ENCODE measurements at regions of chr12 and their contacts with region 1.

Region 1: GRCh38 chr12:108570743-108571608 is 8.6 kb downstream of the ISCU start:
- DNase-seq: no peak
- ATAC-seq: peak in 2 of 8 donors; percentile 12 to 27
- H3K4me3 ChIP-seq: no peak overlapping the region
- H3K27ac ChIP-seq: peak overlapping the region in 1 of 10 donors; percentile 15
- H3K4me1 ChIP-seq: peaks cover 0 to 30% (median 6%) of the 10 kb centered on the region in 9 donors
- H3K27me3 ChIP-seq: no peaks in the 10 kb centered on the region
- CTCF ChIP-seq: peak in 8 of 9 donors; percentile 6 to 52 (median 40)

Region 2: GRCh38 chr12:108514973-108515814 is 55.8 kb before region 1 on chr12 and contains the start of gene FICD:
- intact Hi-C with region 1: no loop called
- DNase-seq: peak; percentile 100
- ATAC-seq: peak; percentile 93 to 98 (median 97)
- H3K4me3 ChIP-seq: peak within 1 kb of the TSS; percentile 65 to 96 (median 79)
- H3K27ac ChIP-seq: peak within 1 kb of the TSS in 9 of 10 donors; percentile 19 to 92 (median 73)
- H3K4me1 ChIP-seq: peaks cover 0 to 29% (median 16%) of the 10 kb centered on the region in 9 donors
- H3K27me3 ChIP-seq: peaks cover 0 to 2% (median 0%) of the 10 kb centered on the region in 7 donors
- CTCF ChIP-seq: no peak
- total RNA-seq, gene FICD: 2.1 to 4.4 (median 2.8) TPM

Region 3: DNA sequence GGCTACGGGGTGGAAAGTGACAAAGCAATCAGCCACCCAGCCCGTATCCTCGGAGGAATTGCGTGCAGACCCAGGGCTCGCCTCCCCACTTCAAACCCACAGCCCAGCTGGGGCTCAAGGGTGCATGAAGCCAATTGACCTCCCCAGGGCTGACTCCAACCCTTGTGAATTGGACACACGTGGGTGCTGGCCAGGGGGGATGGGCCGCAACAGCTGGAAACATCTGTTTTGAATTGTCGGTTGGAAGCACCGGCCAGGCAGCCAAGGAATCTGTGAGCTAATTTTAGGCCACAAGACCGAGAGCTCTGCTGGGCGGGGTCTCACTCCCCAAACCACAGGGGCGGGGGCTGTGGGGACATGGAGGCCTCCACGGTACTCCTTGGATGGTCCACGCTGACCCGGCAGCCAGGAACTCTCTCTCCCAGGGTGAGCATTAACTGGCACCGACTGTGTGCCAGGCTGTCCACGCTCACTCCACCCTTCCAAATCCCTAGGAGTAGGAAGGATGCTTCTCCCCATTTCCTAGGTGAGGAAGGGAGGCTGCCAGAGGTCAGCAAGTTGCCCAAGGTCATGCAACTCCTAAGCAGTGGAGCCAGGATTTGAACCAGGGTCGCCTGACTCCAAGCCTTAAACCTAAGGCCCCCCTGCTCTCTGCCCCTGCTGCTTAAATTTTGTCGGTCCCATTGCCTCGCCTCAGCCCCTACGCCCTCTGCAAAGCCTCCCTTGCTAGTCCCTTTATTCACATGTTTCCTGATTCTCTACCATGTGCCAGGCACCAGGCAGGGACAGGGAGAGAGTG is 38.8 kb after region 1 on chr12:
- intact Hi-C with region 1: loop called in 2 of 10 experiments (anchors 2 to 5 kb)
- DNase-seq: peak; percentile 73 to 84
- ATAC-seq: peak; percentile 81 to 93 (median 86)
- H3K4me3 ChIP-seq: peak overlapping the region in 1 of 10 donors; percentile 15
- H3K27ac ChIP-seq: peak overlapping the region in 2 of 10 donors; percentile 6 to 12
- H3K4me1 ChIP-seq: peaks cover 0 to 31% (median 11%) of the 10 kb centered on the region in 9 donors
- H3K27me3 ChIP-seq: no peaks in the 10 kb centered on the region
- CTCF ChIP-seq: no peak

Region 4: DNA sequence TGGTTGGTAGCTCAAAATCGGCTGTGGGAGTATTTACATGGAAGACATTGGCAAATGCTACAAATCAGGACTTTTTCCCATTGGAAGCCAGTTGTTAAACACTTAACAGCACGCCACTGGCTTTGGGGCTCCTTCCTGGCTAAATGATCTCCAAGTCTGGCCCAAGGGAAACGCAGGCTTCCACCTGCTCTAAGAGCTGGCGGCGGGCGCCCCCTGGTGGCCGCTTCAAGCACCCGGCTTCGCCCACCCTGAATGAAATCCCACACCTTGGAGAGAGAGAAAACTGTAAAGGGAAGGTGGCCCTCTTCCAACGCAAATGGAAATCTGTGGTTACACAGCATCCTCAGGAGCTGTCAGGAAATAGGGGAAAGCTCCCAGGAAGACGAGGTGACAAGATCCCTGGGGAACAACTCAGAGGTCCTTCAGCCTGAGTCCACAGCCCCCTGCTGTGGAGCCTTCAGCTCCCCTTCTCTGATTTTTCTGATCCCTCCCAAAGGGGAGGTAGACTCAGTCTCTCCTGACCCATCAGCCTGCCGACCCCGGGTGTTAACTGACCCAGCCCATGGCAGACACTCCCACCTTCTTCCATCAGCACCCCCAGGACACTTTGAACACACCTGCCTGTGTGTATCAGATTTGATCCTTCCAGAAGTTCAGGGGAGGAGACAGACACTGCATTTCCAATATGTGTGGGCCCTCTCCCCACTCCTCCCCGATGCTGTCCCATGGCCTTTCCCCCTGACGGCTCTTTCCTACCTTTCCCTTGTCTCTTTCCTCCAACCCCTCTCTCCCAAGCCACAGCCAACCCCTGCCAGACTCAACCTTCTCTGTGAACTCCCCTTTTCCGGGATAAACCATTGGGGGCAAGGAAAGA is 47.3 kb after region 1 on chr12:
- intact Hi-C with region 1: loop called in 6 of 10 experiments (anchors 2 to 5 kb)
- DNase-seq: peak; percentile 72 to 82
- ATAC-seq: peak; percentile 72 to 90 (median 84)
- H3K4me3 ChIP-seq: no peak overlapping the region
- H3K27ac ChIP-seq: peak overlapping the region in 1 of 10 donors; percentile 71
- H3K4me1 ChIP-seq: peaks cover 0 to 66% (median 14%) of the 10 kb centered on the region in 9 donors
- H3K27me3 ChIP-seq: no peaks in the 10 kb centered on the region
- CTCF ChIP-seq: peak; percentile 97 to 99 (median 98)

Region 5: DNA sequence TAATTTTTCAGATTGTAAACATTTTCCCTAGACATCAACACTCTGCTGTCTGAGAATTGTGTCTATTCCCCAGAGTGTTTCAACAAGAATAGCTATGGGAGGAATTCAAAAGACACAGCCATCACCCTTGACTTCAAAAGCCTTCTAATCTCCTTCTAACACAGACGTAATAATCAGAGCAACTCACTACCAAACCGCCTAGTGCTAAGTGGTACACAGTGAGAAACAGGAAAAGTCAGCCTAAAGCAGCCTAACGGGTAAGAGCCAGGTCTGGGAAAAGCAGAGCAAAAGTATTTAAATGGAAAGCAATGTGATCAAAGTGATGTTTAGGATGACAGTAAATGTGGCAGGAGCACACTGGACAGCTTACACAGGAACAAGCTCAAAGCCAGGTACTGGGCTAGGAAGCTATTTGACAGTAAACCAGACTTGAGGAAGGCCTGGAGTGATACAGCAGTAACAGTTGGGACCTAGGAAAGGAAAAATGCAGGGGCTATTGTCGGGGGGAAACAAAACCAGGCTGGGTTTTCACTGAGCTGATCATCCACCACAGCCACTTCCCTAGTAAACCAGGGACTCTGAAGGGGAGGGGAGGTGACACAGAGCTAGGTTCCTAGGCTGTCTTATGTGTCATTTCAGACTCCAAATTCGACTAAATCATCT is 130.9 kb after region 1 on chr12:
- intact Hi-C with region 1: no loop called
- DNase-seq: no peak
- ATAC-seq: peak; percentile 40 to 75 (median 69)
- H3K4me3 ChIP-seq: peak overlapping the region in 1 of 10 donors; percentile 23
- H3K27ac ChIP-seq: peak overlapping the region; percentile 47 to 86 (median 65)
- H3K4me1 ChIP-seq: peaks cover 31 to 96% (median 71%) of the 10 kb centered on the region in 9 donors
- H3K27me3 ChIP-seq: no peaks in the 10 kb centered on the region
- CTCF ChIP-seq: no peak

Region 6: DNA sequence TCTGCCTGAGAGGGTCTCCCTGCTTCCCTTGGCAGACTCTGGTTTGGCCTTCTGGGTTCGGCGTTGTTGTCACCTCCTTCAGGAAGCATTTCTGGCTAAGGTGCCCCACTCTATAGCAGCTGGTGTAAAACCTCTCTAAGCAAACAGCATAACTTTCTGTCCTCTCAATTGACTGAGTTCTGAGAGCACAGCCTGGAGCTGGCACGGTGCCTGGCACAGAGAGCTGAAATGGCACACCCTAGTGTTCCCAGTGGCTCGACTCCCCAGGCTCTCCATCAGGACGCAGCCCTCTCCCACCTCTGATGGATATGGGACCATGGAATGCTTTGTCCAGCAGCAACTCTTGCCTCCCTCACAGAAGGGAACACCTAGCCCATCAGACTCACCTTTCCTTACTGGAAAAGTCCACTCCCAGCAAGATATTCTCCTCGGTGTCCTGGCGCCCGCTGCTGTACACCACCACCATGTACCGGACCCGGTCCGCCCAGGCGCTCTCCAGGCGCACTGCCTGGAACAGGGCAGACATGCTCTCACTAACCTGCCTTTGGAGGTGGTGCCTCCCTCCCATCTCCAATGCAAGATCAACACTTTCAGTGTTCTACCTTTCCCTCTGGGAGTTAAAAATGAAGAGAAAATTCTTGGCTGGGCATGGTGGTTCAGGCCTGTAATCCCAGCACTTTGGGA is 245.8 kb after region 1 on chr12:
- intact Hi-C with region 1: loop called in 1 of 10 experiments (anchors 10 kb)
- DNase-seq: peak in 1 of 2 donors; percentile 73
- ATAC-seq: peak; percentile 22 to 74 (median 42)
- H3K4me3 ChIP-seq: no peak overlapping the region
- H3K27ac ChIP-seq: peak overlapping the region in 9 of 10 donors; percentile 5 to 58 (median 25)
- H3K4me1 ChIP-seq: peaks cover 14 to 82% (median 73%) of the 10 kb centered on the region in 9 donors
- H3K27me3 ChIP-seq: no peaks in the 10 kb centered on the region
- CTCF ChIP-seq: peak in 2 of 9 donors; percentile 14 to 18

Measured in heart right ventricle (tissue), 16 donors.